ENCODE measurements at regions of chr4 and their contacts with region 1.

Region 1: GRCh38 chr4:174318829-174319764 is 35.4 kb downstream of the CEP44 start:
- DNase-seq: no peak
- ATAC-seq: no peak

Region 2: DNA sequence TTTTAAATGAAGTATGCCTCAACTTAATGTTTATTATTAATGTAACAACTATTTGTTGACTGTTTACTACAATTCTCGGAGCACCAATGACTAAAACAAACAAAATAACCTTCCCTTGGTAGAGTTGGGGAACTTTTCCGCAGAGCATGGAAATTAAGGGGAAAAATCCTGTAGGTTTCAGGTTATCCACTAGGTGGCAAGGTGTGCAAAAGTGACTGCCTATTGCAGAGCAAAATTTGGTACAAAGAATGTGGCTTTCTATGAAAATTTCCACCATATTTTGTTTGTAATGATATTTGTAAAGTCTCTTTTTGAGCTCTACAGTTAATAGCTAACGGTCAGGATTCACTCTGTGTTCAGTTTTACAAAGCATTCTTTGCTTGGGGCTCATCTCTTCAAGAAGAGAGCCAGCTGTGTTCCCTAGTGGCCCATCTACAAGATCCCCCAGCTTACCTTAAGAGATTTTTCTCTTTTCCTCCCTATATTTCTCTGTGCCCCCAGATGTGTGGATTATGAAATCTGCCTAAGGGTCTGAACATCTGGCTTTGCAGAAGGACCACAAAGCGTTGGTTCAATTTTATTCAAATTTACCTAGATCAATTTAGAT is 96.7 kb before region 1 on chr4:
- intact Hi-C with region 1: loop called (anchors 10 kb)
- DNase-seq: no peak
- ATAC-seq: no peak